HEK293T (cell line): ENCODE measurements at regions of chr4 and their contacts with region 1.

Region 1: GRCh38 chr4:152848508-152848907 is 68.8 kb downstream of the ARFIP1 start:
- DNase-seq: no peak

Region 2: GRCh38 chr4:153127760-153128494 is 279.4 kb after region 1 on chr4:
- CTCF ChIA-PET with region 1: interaction called, 18 read pairs
- POLR2A ChIA-PET with region 1: no interaction called
- DNase-seq: peak; percentile 78